ENCODE measurements at regions of chr3 and their contacts with region 1.

Region 1: DNA sequence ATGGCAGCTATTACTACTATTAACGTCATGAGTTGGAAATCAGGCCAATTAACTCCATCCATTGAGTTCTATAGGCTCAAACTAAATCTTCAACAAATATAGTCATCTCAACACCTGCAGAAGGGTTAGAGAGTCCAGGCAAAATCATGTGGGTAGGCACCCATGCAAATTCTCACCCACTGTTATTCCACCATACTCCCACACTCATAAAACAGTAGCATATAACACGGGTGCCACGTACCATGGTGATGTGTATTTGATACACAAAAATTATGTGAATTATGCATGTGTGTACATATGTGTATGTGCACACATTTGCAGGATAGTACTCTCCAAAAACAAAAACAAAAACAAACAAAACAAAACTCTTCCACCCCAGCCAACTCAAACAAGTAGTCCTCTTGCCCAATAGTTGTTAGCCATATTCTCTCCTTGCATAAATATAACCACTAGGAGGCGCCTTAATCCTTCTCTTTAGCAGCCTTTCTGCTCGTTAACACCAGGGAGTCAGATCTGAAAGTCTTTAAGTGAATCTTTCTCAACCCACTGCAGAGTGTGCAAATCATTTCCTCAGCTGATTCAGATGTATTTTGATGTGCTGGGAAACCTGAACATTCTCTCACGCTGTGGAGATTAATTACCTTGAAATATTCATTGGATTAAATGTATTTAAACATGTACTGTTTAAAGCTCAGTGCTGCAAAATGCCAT is 38.0 kb upstream of the COPB2 start:
- ATAC-seq: peak; percentile 66 to 98 (median 94)
- H3K4me3 ChIP-seq: no peak overlapping the region
- H3K27ac ChIP-seq: no peak overlapping the region
- H3K4me1 ChIP-seq: peaks cover 0 to 2% of the 10 kb centered on the region in 2 donors

Region 2: GRCh38 chr3:138747225-138747624 is 680.2 kb before region 1 on chr3:
- in situ Hi-C with region 1: no loop called
- ATAC-seq: peak in 4 of 8 experiments; percentile 51 to 77 (median 66)
- H3K4me3 ChIP-seq: no peak overlapping the region
- H3K27ac ChIP-seq: no peak overlapping the region
- H3K4me1 ChIP-seq: no peaks in the 10 kb centered on the region

Region 3: DNA sequence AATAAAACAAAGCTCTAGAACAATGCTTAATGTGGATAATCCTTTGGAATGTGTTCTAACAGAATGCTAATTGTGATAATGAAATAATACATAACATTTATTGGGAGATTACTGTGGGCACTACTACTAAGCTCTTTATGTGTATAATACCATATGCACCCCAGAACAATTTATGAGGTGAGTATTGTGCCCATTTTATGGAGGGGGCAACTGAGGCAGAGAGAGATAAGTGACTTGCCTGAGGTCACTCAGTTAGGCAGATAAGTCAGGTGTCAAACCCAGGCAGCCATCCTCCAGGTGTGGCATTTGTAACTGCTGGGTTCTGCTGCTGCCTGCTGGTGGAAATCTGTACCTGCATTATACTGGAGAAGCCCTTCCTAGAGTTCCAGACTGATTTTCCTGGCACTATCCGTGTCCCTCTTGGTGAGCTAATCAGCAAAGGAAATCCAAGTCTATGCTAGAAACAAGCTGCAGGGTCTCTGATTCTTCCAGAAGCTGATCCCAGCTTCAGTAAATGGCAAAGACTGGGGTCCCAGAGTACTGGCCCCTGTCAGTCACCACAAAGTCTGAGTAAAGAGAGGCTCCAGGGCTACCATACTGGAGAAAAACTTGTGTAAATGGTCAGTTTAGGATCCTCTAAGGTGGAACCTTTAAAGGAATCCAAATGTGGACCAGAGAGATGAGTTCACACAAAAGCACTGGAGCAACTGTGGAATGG is 134.7 kb after region 1 on chr3:
- in situ Hi-C with region 1: loop called in 1 of 9 experiments (anchors 10 kb)
- ATAC-seq: peak in 3 of 8 experiments; percentile 31 to 66 (median 47)
- H3K4me3 ChIP-seq: no peak overlapping the region
- H3K27ac ChIP-seq: no peak overlapping the region
- H3K4me1 ChIP-seq: peaks cover 37 to 50% of the 10 kb centered on the region in 2 donors

Region 4: GRCh38 chr3:139655909-139656595 is 228.6 kb after region 1 on chr3:
- in situ Hi-C with region 1: no loop called
- ATAC-seq: peak in 3 of 8 experiments; percentile 27 to 53 (median 27)
- H3K4me3 ChIP-seq: no peak overlapping the region
- H3K27ac ChIP-seq: no peak overlapping the region
- H3K4me1 ChIP-seq: peaks cover 5 to 6% of the 10 kb centered on the region in 2 donors

Region 5: DNA sequence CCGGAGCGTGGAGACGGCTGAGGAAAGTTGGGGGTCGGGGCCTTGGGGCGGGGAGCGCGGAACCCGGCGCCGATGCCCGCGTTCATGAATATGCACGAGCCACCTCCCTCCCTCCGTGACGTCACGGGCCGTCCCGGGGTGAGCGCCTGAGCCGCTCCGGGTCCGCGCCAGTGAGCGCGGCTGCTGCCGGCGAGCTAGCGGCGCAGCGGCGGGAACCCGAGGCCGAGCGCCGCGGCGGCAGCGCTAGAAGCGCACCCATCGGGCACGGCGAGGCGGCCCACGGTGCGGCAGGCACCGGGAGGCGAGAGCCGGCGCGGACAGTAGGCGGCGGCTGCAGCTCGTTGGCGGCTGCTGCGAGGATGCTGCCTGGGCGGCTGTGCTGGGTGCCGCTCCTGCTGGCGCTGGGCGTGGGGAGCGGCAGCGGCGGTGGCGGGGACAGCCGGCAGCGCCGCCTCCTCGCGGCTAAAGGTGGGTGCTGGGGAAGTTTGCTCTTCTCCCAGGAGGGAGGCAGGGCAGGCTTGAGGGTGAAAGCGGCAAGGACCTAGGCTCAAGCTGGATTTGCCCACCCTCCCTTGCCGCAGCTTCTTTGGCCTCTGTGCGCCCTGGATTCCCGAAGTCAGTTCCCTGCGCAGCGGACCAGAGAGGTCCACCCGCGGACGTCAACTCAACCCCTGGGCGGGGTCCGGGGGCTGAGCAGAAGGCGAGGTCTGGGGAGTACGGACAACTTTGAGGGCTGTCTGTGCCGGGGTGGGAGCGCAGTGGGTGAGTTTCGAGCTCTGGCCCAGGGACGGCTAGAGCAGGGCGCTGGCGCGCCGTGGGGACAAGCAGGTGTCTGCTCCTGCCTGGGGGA is 507.8 kb after region 1 on chr3 and contains the start of gene CLSTN2:
- in situ Hi-C with region 1: loop called in 2 of 9 experiments (anchors 25 kb)
- ATAC-seq: peak; percentile 83 to 92 (median 86)
- H3K4me3 ChIP-seq: peak within 1 kb of the TSS; percentile 54 to 88 (median 69)
- H3K27ac ChIP-seq: peak within 1 kb of the TSS; percentile 23 to 42
- H3K4me1 ChIP-seq: peaks cover 3 to 12% of the 10 kb centered on the region in 2 donors
- total RNA-seq, gene CLSTN2: 1.2 to 125 (median 27.9) TPM

Region 6: DNA sequence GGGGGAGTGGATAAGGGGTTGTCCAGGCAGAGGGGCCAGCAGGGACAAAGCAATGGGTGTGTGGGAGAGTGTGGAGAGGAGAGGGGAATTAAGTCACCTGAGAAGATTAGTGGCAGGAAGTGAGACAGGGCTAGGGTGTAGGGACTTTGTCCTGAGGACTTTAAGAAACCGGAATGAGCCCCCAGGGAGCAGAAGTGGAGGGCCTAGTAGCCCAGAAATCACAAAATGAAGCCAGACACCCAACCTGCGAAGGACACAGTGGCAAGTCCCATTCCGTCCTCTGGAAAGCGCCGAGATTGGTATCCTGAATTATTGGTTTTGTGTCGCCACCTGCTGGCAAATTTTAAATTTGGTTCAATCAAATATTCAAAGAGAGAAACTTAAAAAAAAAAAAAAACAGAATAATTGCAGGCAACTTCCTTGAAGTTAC is 1436.2 kb after region 1 on chr3:
- in situ Hi-C with region 1: loop called in 2 of 9 experiments (anchors 25 kb)
- ATAC-seq: peak; percentile 59 to 87 (median 68)
- H3K4me3 ChIP-seq: no peak overlapping the region
- H3K27ac ChIP-seq: no peak overlapping the region
- H3K4me1 ChIP-seq: no peaks in the 10 kb centered on the region